ENCODE measurements at regions of chr13 and their contacts with region 1.

Region 1: GRCh38 chr13:44540761-44541434 is 35.2 kb downstream of the TSC22D1 start:
- DNase-seq: no peak
- H3K4me3 Mint-ChIP-seq: no peak overlapping the region
- H3K27ac Mint-ChIP-seq: no peak overlapping the region
- H3K4me1 Mint-ChIP-seq: no peaks in the 10 kb centered on the region
- H3K27me3 Mint-ChIP-seq: no peaks in the 10 kb centered on the region
- CTCF ChIP-seq: no peak

Region 2: GRCh38 chr13:44523146-44524015 is 17.5 kb before region 1 on chr13:
- CTCF ChIA-PET with region 1: interaction called, 4 read pairs
- POLR2A ChIA-PET with region 1: interaction called, 16 read pairs
- intact Hi-C with region 1: no loop called
- DNase-seq: peak; percentile 78
- H3K4me3 Mint-ChIP-seq: no peak overlapping the region
- H3K27ac Mint-ChIP-seq: no peak overlapping the region
- H3K4me1 Mint-ChIP-seq: no peaks in the 10 kb centered on the region
- H3K27me3 Mint-ChIP-seq: no peaks in the 10 kb centered on the region
- CTCF ChIP-seq: no peak